Left cardiac atrium (tissue), 4 donors: ENCODE measurements at regions of chr17 and their contacts with region 1.

Region 1: GRCh38 chr17:40068917-40069750 is 6.4 kb downstream of the THRA start:
- DNase-seq: peak; percentile 90
- ATAC-seq: peak; percentile 55 to 59

Region 2: GRCh38 chr17:40026816-40027613 is 42.1 kb before region 1 on chr17:
- intact Hi-C with region 1: loop called in 1 of 2 experiments (anchors 5 kb)
- DNase-seq: peak; percentile 87
- ATAC-seq: peak; percentile 94 to 95

Region 3: GRCh38 chr17:40362696-40363110 is 293.6 kb after region 1 on chr17:
- intact Hi-C with region 1: no loop called
- DNase-seq: peak; percentile 72
- ATAC-seq: peak; percentile 29 to 35